HCT116 (cell line): ENCODE measurements at regions of chr10 and their contacts with region 1.

Region 1: GRCh38 chr10:125982260-125982948 is 86.0 kb downstream of the FANK1 start:
- DNase-seq: peak; percentile 64
- ATAC-seq: peak; percentile 95
- H3K4me3 ChIP-seq: no peak overlapping the region
- H3K27ac ChIP-seq: no peak overlapping the region
- H3K4me1 ChIP-seq: no peaks in the 10 kb centered on the region
- H3K27me3 ChIP-seq: peaks cover 15% of the 10 kb centered on the region; the same call in 1 of the 2 replicates
- CTCF ChIP-seq: peak; percentile 59 to 78 (median 75)
- POLR2A ChIP-seq: no peak
- RAD21 ChIP-seq: peak; percentile 92

Region 2: DNA sequence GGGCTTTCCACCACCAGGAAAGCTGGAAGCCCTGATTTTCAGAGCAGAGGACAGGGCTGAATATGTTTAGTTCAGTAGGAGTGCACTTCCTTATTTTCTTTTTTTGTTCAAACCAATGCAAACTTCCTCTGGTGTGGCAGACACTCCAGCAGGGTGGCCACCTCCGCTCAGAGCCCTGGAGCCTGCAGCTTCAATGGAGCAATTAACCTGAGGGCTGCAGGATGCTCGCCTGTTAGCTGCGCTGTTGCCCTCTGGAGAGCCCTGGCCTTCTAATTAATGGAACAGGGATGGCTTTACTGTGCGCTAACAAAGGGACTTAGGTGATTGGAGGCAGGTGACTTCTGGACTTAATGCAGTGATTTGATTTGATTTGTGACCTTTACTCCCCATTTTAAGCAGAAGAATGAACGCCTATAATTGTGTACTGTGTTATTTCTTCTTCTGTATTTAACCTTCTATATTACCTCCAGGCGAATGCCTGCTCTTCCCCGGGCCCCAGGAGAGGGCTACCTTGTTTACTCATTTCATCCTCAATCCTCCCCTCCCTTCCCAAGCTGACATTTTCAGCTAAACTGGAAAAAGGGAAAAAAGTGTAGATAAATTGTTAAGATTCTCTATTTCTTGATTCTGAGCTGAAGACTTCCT is 699.1 kb before region 1 on chr10:
- CTCF ChIA-PET with region 1: no interaction called
- POLR2A ChIA-PET with region 1: no interaction called
- RAD21 ChIA-PET with region 1: no interaction called
- intact Hi-C with region 1: no loop called
- DNase-seq: no peak
- ATAC-seq: no peak
- H3K4me3 ChIP-seq: no peak overlapping the region
- H3K27ac ChIP-seq: no peak overlapping the region
- H3K4me1 ChIP-seq: peaks cover 2 to 10% of the 10 kb centered on the region in 2 experiments; a peak in 2 of 4 replicates
- H3K27me3 ChIP-seq: no peaks in the 10 kb centered on the region
- CTCF ChIP-seq: no peak
- POLR2A ChIP-seq: no peak
- RAD21 ChIP-seq: peak; percentile 35

Region 3: DNA sequence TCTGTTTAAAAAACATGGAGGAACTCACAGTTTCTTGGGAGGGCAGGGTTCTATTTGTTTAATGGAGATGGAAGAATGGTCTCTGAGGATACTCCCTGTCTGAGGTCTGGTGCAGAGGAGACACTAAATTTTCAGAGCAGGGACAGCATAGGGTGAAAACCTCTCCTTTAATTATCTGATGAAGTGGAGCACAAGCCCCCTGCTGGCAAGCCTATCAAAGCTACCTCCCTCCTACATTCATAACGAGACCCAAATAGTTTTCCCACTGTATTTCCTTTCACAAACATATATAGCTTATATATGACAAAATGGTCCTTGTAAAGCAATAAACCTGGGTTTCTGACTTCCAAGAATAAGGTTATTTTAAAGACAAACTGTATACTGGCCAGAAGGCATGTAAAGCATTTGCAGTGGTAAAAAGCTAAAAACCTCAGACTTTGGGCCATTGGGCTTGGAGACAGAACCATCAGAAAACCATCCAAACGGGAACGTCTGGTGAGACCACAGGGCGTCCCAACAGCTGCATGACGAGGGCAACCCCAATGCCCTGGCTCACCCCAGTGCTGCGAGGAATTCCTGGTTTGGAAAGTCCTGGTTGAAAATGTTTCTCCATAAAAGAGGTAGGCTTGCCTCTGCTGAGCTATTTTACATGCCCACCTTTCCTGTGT is 115.3 kb after region 1 on chr10:
- CTCF ChIA-PET with region 1: interaction called, 5 read pairs
- POLR2A ChIA-PET with region 1: no interaction called
- RAD21 ChIA-PET with region 1: no interaction called
- intact Hi-C with region 1: loop called (anchors 5 kb)
- DNase-seq: no peak
- ATAC-seq: peak; percentile 73
- H3K4me3 ChIP-seq: no peak overlapping the region
- H3K27ac ChIP-seq: no peak overlapping the region
- H3K4me1 ChIP-seq: no peaks in the 10 kb centered on the region
- H3K27me3 ChIP-seq: peaks cover 55% of the 10 kb centered on the region
- CTCF ChIP-seq: peak; percentile 16 to 55 (median 52); a peak in 5 of 6 replicates
- POLR2A ChIP-seq: no peak
- RAD21 ChIP-seq: peak; percentile 40; the same call in 1 of the 2 replicates

Region 4: GRCh38 chr10:126160971-126161659 is 178.7 kb after region 1 on chr10:
- CTCF ChIA-PET with region 1: interaction called, 7 read pairs
- POLR2A ChIA-PET with region 1: no interaction called
- RAD21 ChIA-PET with region 1: no interaction called
- intact Hi-C with region 1: loop called (anchors 1 kb)
- DNase-seq: peak; percentile 50
- ATAC-seq: peak; percentile 82
- H3K4me3 ChIP-seq: no peak overlapping the region
- H3K27ac ChIP-seq: no peak overlapping the region
- H3K4me1 ChIP-seq: no peaks in the 10 kb centered on the region
- H3K27me3 ChIP-seq: peaks cover 58% of the 10 kb centered on the region
- CTCF ChIP-seq: peak; percentile 74 to 93 (median 88)
- POLR2A ChIP-seq: no peak
- RAD21 ChIP-seq: peak; percentile 91

Region 5: DNA sequence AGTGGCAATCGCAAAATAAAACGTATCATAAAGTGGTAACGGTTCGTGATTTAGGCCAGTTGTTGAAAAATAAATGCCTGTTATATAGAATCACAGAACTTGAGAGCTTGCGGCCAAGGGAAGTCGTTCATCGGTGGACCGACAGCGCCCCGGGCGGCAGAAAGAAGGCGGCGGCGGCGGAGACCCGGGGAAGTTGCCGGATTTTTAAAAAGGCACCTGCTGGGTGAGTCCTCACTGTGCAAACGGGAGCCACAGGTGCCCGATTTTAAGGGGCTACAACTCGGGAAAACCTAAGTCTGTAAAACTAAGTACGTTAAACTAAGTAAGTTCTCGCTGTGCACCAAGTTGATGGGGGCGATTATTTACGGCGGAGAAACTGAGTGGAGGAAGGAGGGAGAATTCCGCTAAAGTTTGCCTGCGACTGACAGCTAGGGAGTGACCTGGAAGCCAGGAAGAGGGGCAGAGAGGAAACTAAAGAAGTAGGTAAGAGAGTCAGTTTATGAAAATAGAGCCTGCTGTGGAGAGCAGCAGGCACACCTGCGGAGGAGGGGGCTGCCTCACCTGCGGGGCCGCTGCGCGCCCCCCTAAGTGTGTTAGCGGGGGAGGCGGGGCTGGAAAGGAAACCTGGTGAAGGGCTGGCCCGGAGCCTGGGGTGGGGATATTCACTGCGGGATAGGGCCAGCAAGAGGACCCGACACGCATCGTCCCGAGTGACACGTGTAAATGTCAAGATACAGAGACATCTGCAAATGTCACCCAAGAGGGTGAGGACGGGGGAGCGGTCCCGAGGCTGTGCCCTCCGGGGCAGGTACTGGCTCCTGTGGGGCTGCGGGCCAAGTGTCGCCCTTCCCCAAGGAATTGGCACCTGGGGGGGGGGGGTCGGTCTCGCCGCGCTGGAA is 404.9 kb after region 1 on chr10:
- CTCF ChIA-PET with region 1: no interaction called
- POLR2A ChIA-PET with region 1: no interaction called
- RAD21 ChIA-PET with region 1: no interaction called
- intact Hi-C with region 1: loop called (anchors 5 kb)
- DNase-seq: no peak
- ATAC-seq: peak; percentile 70
- H3K4me3 ChIP-seq: no peak overlapping the region
- H3K27ac ChIP-seq: no peak overlapping the region
- H3K4me1 ChIP-seq: no peaks in the 10 kb centered on the region
- H3K27me3 ChIP-seq: peaks cover 25% of the 10 kb centered on the region; the same call in 1 of the 2 replicates
- CTCF ChIP-seq: peak; percentile 24 to 54 (median 40); a peak in 4 of 6 replicates
- POLR2A ChIP-seq: no peak
- RAD21 ChIP-seq: peak; percentile 55

Region 6: DNA sequence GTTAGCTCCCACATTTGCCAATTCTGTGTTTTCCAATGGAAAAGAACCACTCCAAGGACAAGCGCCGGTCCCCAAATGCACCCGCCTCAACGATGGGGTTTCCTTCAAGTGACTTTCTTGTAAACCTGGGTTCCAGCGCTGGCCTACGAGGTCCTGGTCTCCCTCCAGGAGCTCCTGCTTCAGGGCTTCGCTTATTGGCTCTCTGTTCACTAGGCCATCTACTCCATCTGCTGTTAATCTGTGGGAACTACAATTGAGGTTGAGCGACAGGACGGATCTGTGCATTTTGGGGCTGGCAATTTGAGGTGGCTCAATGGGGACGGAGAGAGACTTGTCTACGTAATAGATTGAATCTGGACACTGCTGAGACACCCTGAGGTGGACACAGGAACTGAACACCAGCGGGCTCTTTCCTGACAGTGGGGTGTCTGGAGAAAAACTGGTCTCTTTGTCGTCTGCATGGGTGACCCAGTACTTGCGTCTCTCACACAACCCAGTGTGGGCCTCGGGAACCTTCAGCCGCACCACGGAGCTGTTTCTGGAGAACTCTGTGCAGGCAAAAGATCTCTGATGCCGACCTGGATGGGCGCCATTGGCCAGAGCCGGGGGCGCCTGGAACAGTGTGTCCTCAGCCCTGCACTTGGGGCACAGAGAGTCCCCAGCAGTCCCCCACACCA is 521.8 kb after region 1 on chr10:
- CTCF ChIA-PET with region 1: interaction called, 6 read pairs
- POLR2A ChIA-PET with region 1: no interaction called
- RAD21 ChIA-PET with region 1: interaction called in 1 of 2 experiments, 3 read pairs
- intact Hi-C with region 1: loop called (anchors 1 kb)
- DNase-seq: peak; percentile 68
- ATAC-seq: peak; percentile 96
- H3K4me3 ChIP-seq: no peak overlapping the region
- H3K27ac ChIP-seq: no peak overlapping the region
- H3K4me1 ChIP-seq: no peaks in the 10 kb centered on the region
- H3K27me3 ChIP-seq: peaks cover 25% of the 10 kb centered on the region; the same call in 1 of the 2 replicates
- CTCF ChIP-seq: peak; percentile 74 to 83 (median 75)
- POLR2A ChIP-seq: no peak
- RAD21 ChIP-seq: peak; percentile 91

Region 7: DNA sequence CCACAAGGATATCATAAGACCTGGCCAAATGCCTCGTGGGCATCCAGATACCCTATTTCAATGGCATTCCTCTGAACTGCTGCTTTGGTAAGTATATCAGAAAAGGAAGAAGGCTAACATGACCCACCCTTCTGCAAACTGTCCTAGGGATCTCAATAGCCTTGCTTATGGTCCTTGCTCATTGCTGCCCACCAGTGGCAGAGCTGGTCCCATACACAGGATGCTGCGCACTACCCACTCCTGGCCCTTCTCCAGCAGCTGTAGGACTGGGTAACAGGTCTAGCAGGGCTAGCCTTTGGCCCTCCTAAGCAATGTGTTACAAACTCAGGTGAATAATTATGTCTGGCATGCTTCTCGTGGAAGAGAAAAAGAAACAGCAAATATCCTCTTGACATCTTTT is 615.6 kb after region 1 on chr10:
- CTCF ChIA-PET with region 1: interaction called, 4 read pairs
- POLR2A ChIA-PET with region 1: no interaction called
- RAD21 ChIA-PET with region 1: no interaction called
- intact Hi-C with region 1: loop called (anchors 1 kb)
- DNase-seq: peak; percentile 38
- ATAC-seq: peak; percentile 98
- H3K4me3 ChIP-seq: no peak overlapping the region
- H3K27ac ChIP-seq: no peak overlapping the region
- H3K4me1 ChIP-seq: no peaks in the 10 kb centered on the region
- H3K27me3 ChIP-seq: peaks cover 53% of the 10 kb centered on the region
- CTCF ChIP-seq: peak; percentile 55 to 93 (median 86); a peak in 5 of 6 replicates
- POLR2A ChIP-seq: no peak
- RAD21 ChIP-seq: peak; percentile 66

Region 8: GRCh38 chr10:126749015-126749655 is 766.7 kb after region 1 on chr10:
- CTCF ChIA-PET with region 1: no interaction called
- POLR2A ChIA-PET with region 1: no interaction called
- RAD21 ChIA-PET with region 1: no interaction called
- intact Hi-C with region 1: loop called (anchors 1 kb)
- DNase-seq: peak; percentile 70
- ATAC-seq: peak; percentile 100
- H3K4me3 ChIP-seq: no peak overlapping the region
- H3K27ac ChIP-seq: no peak overlapping the region
- H3K4me1 ChIP-seq: no peaks in the 10 kb centered on the region
- H3K27me3 ChIP-seq: peaks cover 5% of the 10 kb centered on the region; the same call in 1 of the 2 replicates
- CTCF ChIP-seq: peak; percentile 71 to 98 (median 96)
- POLR2A ChIP-seq: no peak
- RAD21 ChIP-seq: peak; percentile 83